Activated CD8-positive, alpha-beta T cell treated with anti-CD3 and anti-CD28 coated beads for 36 hours (primary cell): ENCODE measurements at regions of chr15 and their contacts with region 1.

Region 1: DNA sequence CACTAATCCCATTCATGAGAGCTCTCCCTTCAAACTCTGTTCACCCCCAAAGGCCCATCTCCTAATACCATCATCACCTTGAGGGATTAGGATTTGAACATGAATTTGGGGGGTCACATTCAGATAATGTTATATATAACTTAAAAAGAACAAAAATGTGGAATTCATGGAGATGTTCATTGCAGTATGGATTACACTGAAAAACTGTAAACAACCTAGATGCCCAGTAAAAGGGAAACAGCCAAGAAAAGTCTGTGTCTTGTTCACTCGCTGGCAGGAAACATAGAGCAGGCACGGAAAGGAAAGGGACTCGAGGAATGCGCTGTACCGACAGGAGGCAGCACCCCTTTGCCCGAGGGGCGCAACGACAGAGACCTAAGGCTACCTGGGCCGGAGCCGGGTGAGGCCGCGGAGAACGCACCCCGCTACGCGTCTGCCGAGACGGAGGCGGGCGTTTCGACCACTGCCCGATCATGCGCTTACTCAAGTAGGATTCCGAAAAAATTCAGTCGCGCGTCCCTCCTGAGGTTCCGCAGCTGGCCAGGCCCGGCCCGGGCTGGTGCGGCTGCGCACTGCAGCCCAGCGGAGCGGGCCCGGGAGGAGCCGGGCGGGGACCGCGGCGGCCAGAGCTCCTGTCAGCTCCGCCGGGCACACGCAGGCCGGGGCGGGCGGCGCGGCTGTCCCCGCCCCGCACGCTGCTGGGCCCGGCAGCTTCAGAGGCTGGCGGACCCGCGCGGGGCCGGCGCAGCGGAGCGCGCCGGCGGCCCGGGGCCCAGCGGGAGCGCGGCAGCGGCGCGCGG is 862 bp upstream of the MAN2A2 start:
- DNase-seq: peak; percentile 79
- ATAC-seq: peak; percentile 73
- H3K4me3 Mint-ChIP-seq: peak overlapping the region; percentile 85
- H3K27ac Mint-ChIP-seq: peak overlapping the region; percentile 94
- H3K4me1 Mint-ChIP-seq: peaks cover 24% of the 10 kb centered on the region
- H3K27me3 Mint-ChIP-seq: no peaks in the 10 kb centered on the region
- CTCF ChIP-seq: peak; percentile 77

Region 2: GRCh38 chr15:90583471-90584252 is 318.6 kb before region 1 on chr15:
- CTCF ChIA-PET with region 1: no interaction called
- POLR2A ChIA-PET with region 1: no interaction called
- intact Hi-C with region 1: no loop called
- DNase-seq: no peak
- ATAC-seq: no peak
- H3K4me3 Mint-ChIP-seq: no peak overlapping the region
- H3K27ac Mint-ChIP-seq: peak overlapping the region; percentile 11
- H3K4me1 Mint-ChIP-seq: peaks cover 60% of the 10 kb centered on the region
- H3K27me3 Mint-ChIP-seq: no peaks in the 10 kb centered on the region
- CTCF ChIP-seq: no peak

Region 3: GRCh38 chr15:90716976-90717821 is 185.0 kb before region 1 on chr15 and contains the start of gene BLM:
- CTCF ChIA-PET with region 1: interaction called, 7 read pairs
- POLR2A ChIA-PET with region 1: interaction called, 12 read pairs
- intact Hi-C with region 1: no loop called
- DNase-seq: peak; percentile 96
- ATAC-seq: peak; percentile 100
- H3K4me3 Mint-ChIP-seq: peak within 1 kb of the TSS; percentile 84
- H3K27ac Mint-ChIP-seq: peak within 1 kb of the TSS; percentile 96
- H3K4me1 Mint-ChIP-seq: peaks cover 18% of the 10 kb centered on the region
- H3K27me3 Mint-ChIP-seq: no peaks in the 10 kb centered on the region
- CTCF ChIP-seq: no peak
- total RNA-seq, gene BLM: 45.2 to 53.6 TPM

Region 4: DNA sequence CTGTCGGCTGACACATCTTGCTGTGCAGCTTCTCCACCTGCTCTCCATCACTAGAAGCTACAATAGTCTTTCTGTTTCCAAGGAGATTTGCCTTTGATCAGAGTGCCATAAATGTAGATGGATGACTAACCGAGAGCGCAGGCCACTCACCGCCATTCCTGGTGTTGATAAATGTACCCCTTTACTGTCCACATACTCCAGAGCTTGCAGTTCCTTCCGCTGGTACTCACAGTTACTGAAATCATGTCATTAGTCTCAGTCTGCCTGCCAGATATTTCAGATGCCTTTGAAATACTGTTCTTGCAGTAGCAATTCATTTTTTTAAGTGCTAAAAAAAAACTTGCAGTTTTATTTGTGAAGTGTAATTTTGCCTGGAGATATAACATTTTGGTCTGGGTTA is 112.8 kb before region 1 on chr15:
- CTCF ChIA-PET with region 1: no interaction called
- POLR2A ChIA-PET with region 1: no interaction called
- intact Hi-C with region 1: no loop called
- DNase-seq: no peak
- ATAC-seq: no peak
- H3K4me3 Mint-ChIP-seq: no peak overlapping the region
- H3K27ac Mint-ChIP-seq: no peak overlapping the region
- H3K4me1 Mint-ChIP-seq: no peaks in the 10 kb centered on the region
- H3K27me3 Mint-ChIP-seq: no peaks in the 10 kb centered on the region
- CTCF ChIP-seq: no peak

Region 5: GRCh38 chr15:90812171-90812957 is 89.9 kb before region 1 on chr15:
- CTCF ChIA-PET with region 1: no interaction called
- POLR2A ChIA-PET with region 1: no interaction called
- intact Hi-C with region 1: no loop called
- DNase-seq: no peak
- ATAC-seq: no peak
- H3K4me3 Mint-ChIP-seq: no peak overlapping the region
- H3K27ac Mint-ChIP-seq: no peak overlapping the region
- H3K4me1 Mint-ChIP-seq: peaks cover 41% of the 10 kb centered on the region
- H3K27me3 Mint-ChIP-seq: no peaks in the 10 kb centered on the region
- CTCF ChIP-seq: no peak

Region 6: DNA sequence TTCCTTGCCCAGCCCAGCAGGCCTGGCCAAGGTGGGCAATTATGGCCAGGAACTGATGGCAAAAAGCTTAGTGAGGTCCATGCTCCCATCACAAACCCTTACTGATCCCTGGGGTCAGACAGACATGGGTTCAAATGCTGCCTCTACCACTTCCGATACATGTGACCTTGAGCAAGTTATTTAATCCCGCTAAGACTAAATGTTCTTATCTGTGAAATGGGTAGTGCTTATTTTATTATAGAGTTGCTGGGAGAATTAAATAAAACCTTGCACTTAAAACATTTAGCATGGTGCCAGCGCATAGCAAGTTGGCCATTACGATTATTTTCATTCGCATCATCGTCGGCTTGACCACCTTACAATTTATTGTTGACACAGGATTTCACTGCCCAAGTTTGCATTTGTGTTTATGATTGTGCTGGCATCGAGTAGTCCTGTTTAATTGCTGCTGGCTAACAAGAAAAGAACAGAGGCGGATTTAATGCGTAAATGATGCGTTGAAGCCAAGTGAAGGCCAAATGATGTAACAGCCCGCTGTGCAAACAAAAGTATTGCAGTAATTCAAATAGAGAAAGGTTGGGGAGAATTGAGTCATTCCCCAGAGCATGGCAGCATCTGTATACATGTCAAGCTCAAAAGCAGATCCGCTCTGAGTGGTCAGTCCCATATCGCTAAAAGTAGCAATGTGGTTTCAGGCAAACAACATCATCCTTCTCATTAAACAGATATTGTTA is 41.1 kb before region 1 on chr15:
- CTCF ChIA-PET with region 1: no interaction called
- POLR2A ChIA-PET with region 1: no interaction called
- intact Hi-C with region 1: no loop called
- DNase-seq: peak; percentile 12
- ATAC-seq: no peak
- H3K4me3 Mint-ChIP-seq: no peak overlapping the region
- H3K27ac Mint-ChIP-seq: no peak overlapping the region
- H3K4me1 Mint-ChIP-seq: peaks cover 33% of the 10 kb centered on the region
- H3K27me3 Mint-ChIP-seq: no peaks in the 10 kb centered on the region
- CTCF ChIP-seq: no peak

Region 7: DNA sequence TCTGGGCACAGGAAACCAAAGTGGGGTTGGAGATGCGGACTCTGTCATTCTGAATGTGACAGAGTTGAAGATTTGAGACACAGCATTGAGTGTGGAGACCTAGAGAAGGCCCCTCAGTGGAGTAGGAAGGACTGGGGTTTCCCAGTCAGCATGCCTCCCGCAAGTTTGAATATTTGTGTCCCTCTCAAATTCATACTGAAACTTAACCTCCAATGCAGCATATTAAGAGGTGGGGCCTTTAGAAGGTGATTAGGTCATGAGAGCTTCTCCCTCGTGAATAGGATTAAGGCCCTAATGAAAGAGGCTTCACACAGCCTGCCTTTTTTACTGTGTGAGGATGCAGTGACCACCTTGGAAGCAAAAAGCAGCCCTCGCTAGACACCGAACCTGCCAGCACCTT is 22.1 kb after region 1 on chr15:
- CTCF ChIA-PET with region 1: interaction called, 255 read pairs
- POLR2A ChIA-PET with region 1: interaction called, 133 read pairs
- intact Hi-C with region 1: no loop called
- DNase-seq: peak; percentile 28
- ATAC-seq: peak; percentile 65
- H3K4me3 Mint-ChIP-seq: no peak overlapping the region
- H3K27ac Mint-ChIP-seq: peak overlapping the region; percentile 49
- H3K4me1 Mint-ChIP-seq: peaks cover 23% of the 10 kb centered on the region
- H3K27me3 Mint-ChIP-seq: no peaks in the 10 kb centered on the region
- CTCF ChIP-seq: no peak